HCT116 (cell line): ENCODE measurements at regions of chr12 and their contacts with region 1.

Region 1: GRCh38 chr12:99386907-99387306 is 260.6 kb upstream of the GARIN6 start:
- DNase-seq: peak; percentile 28
- ATAC-seq: peak; percentile 69
- H3K4me3 ChIP-seq: no peak overlapping the region
- H3K27ac ChIP-seq: no peak overlapping the region
- H3K4me1 ChIP-seq: no peaks in the 10 kb centered on the region
- H3K27me3 ChIP-seq: peaks cover 10% of the 10 kb centered on the region; the same call in 1 of the 2 replicates
- CTCF ChIP-seq: peak; percentile 48 to 68 (median 65); a peak in 5 of 6 replicates
- POLR2A ChIP-seq: no peak
- RAD21 ChIP-seq: peak; percentile 62

Region 2: GRCh38 chr12:99043319-99043914 is 343.5 kb before region 1 on chr12:
- CTCF ChIA-PET with region 1: interaction called, 8 read pairs
- POLR2A ChIA-PET with region 1: no interaction called
- RAD21 ChIA-PET with region 1: no interaction called
- intact Hi-C with region 1: loop called (anchors 5 kb)
- DNase-seq: peak; percentile 51
- ATAC-seq: peak; percentile 74; the same call in 1 of the 2 replicates
- H3K4me3 ChIP-seq: no peak overlapping the region
- H3K27ac ChIP-seq: no peak overlapping the region
- H3K4me1 ChIP-seq: no peaks in the 10 kb centered on the region
- H3K27me3 ChIP-seq: peaks cover under 1% of the 10 kb centered on the region; the same call in 1 of the 2 replicates
- CTCF ChIP-seq: peak; percentile 68 to 90 (median 89); a peak in 5 of 6 replicates
- POLR2A ChIP-seq: no peak
- RAD21 ChIP-seq: peak; percentile 85

Region 3: DNA sequence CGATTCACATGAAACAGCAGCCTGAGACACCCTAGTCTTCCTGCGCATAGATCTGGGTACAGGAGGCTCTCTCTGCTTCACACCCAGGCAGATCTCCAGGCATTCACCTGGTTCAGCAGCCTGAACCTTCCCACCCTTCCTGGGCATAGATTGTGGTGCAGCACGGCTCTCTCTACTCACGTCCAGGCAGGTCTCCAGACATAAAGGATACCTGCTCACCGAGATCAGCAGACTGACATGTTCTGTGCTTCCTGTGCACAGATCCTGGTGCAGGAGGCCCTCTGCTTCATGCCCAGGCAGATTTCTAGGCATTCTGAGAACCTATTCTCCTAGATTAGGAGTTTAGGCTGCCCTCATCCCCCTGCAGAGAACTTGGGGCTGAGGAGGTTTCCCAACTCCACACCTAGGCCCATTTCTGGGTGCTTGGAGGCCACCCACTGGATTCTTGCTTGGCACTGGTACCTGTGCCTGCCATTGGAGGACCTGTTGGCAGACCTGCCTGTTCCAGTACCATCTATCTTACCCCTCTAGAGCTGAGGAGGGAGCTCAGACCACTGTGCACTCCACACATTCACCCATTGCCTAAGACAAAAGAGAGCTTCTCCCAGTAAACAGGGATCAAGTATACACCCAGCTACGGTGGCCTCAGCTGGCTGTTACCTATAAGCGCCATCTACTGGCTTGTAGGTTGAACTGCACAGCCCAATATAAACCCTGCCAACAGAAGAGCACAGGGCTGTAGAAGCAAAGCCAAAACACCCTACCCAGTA is 232.7 kb after region 1 on chr12:
- CTCF ChIA-PET with region 1: interaction called, 5 read pairs
- POLR2A ChIA-PET with region 1: no interaction called
- RAD21 ChIA-PET with region 1: no interaction called
- intact Hi-C with region 1: loop called (anchors 1 kb)
- DNase-seq: peak; percentile 23
- ATAC-seq: peak; percentile 92
- H3K4me3 ChIP-seq: no peak overlapping the region
- H3K27ac ChIP-seq: no peak overlapping the region
- H3K4me1 ChIP-seq: no peaks in the 10 kb centered on the region
- H3K27me3 ChIP-seq: no peaks in the 10 kb centered on the region
- CTCF ChIP-seq: peak; percentile 55 to 83 (median 80); a peak in 5 of 6 replicates
- POLR2A ChIP-seq: no peak
- RAD21 ChIP-seq: peak; percentile 68

Region 4: GRCh38 chr12:99658671-99659349 is 271.9 kb after region 1 on chr12:
- CTCF ChIA-PET with region 1: interaction called, 30 read pairs
- POLR2A ChIA-PET with region 1: no interaction called
- RAD21 ChIA-PET with region 1: interaction called in 1 of 2 experiments, 3 read pairs
- intact Hi-C with region 1: loop called (anchors 2 kb)
- DNase-seq: peak; percentile 4
- ATAC-seq: no peak
- H3K4me3 ChIP-seq: no peak overlapping the region
- H3K27ac ChIP-seq: no peak overlapping the region
- H3K4me1 ChIP-seq: no peaks in the 10 kb centered on the region
- H3K27me3 ChIP-seq: 0 out of 2 replicates have a peak, but pooled peaks cover 12% of the 10 kb centered on the region
- CTCF ChIP-seq: peak; percentile 20 to 43 (median 30); a peak in 2 of 6 replicates
- POLR2A ChIP-seq: no peak
- RAD21 ChIP-seq: peak; percentile 56

Region 5: DNA sequence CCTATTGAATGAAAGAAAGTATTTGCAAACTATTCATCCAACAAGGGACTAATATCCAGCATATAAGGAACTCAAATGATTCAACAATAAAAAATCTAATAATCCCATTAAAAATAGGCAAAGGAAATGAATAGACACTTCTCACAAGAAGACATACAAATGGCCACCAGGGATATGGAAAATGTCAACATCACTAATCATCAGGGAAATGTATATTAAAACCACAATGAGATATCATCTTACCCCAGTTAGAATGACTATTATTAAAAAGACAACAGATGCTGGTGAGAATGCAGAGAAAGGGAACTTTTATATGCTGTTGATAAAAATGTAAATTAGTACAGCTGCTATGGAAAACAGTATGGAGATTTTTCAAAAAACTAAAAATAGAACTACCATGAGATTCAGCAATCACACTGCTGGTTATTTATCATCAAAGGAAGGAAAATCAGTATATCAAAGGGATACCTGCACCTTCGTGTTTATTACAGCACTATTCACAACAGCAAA is 349.9 kb after region 1 on chr12:
- CTCF ChIA-PET with region 1: no interaction called
- POLR2A ChIA-PET with region 1: no interaction called
- RAD21 ChIA-PET with region 1: no interaction called
- intact Hi-C with region 1: no loop called
- DNase-seq: no peak
- ATAC-seq: no peak
- H3K4me3 ChIP-seq: no peak overlapping the region
- H3K27ac ChIP-seq: no peak overlapping the region
- H3K4me1 ChIP-seq: no peaks in the 10 kb centered on the region
- H3K27me3 ChIP-seq: peaks cover 11% of the 10 kb centered on the region; the same call in 1 of the 2 replicates
- CTCF ChIP-seq: no peak
- POLR2A ChIP-seq: no peak
- RAD21 ChIP-seq: no peak

Region 6: GRCh38 chr12:99767809-99768208 is 380.9 kb after region 1 on chr12:
- CTCF ChIA-PET with region 1: interaction called, 8 read pairs
- POLR2A ChIA-PET with region 1: no interaction called
- RAD21 ChIA-PET with region 1: no interaction called
- intact Hi-C with region 1: loop called (anchors 5 kb)
- DNase-seq: peak; percentile 7
- ATAC-seq: no peak
- H3K4me3 ChIP-seq: no peak overlapping the region
- H3K27ac ChIP-seq: no peak overlapping the region
- H3K4me1 ChIP-seq: no peaks in the 10 kb centered on the region
- H3K27me3 ChIP-seq: peaks cover 36% of the 10 kb centered on the region
- CTCF ChIP-seq: peak; percentile 30 to 57 (median 37); a peak in 4 of 6 replicates
- POLR2A ChIP-seq: no peak
- RAD21 ChIP-seq: peak; percentile 52